Lower leg skin (tissue), 4 donors: ENCODE measurements at regions of chr4 and their contacts with region 1.

Region 1: GRCh38 chr4:158253350-158253980 is 43.2 kb downstream of the TMEM144 start:
- DNase-seq: peak in 1 of 2 donors; percentile 54
- H3K4me3 ChIP-seq: no peak overlapping the region
- CTCF ChIP-seq: no peak
- POLR2A ChIP-seq: no peak

Region 2: GRCh38 chr4:157992038-157992705 is 261.3 kb before region 1 on chr4:
- intact Hi-C with region 1: loop called (anchors 5 kb)
- DNase-seq: peak in 1 of 2 donors; percentile 64
- H3K4me3 ChIP-seq: no peak overlapping the region
- CTCF ChIP-seq: peak in 1 of 3 donors; percentile 64
- POLR2A ChIP-seq: no peak

Region 3: GRCh38 chr4:158042591-158043030 is 210.9 kb before region 1 on chr4:
- intact Hi-C with region 1: no loop called
- DNase-seq: no peak
- H3K4me3 ChIP-seq: no peak overlapping the region
- CTCF ChIP-seq: no peak
- POLR2A ChIP-seq: no peak

Region 4: GRCh38 chr4:158193171-158193749 is 60.2 kb before region 1 on chr4:
- intact Hi-C with region 1: loop called (anchors 10 kb)
- DNase-seq: no peak
- H3K4me3 ChIP-seq: no peak overlapping the region
- CTCF ChIP-seq: no peak
- POLR2A ChIP-seq: no peak

Region 5: GRCh38 chr4:158571736-158572135 is 318.3 kb after region 1 on chr4:
- intact Hi-C with region 1: no loop called
- DNase-seq: no peak
- H3K4me3 ChIP-seq: no peak overlapping the region
- CTCF ChIP-seq: no peak
- POLR2A ChIP-seq: no peak